T-cell (primary cell): ENCODE measurements at regions of chr13 and their contacts with region 1.

Region 1: GRCh38 chr13:75102001-75102716 is 379.8 kb downstream of the TBC1D4 start:
- DNase-seq: no peak
- ATAC-seq: no peak
- H3K4me3 ChIP-seq: no peak overlapping the region
- H3K4me3 Mint-ChIP-seq: no peak overlapping the region
- H3K27ac ChIP-seq: no peak overlapping the region
- H3K27ac Mint-ChIP-seq: no peak overlapping the region
- H3K4me1 ChIP-seq: no peaks in the 10 kb centered on the region
- H3K4me1 Mint-ChIP-seq: no peaks in the 10 kb centered on the region
- H3K27me3 ChIP-seq: no peaks in the 10 kb centered on the region
- H3K27me3 Mint-ChIP-seq: peaks cover 18 to 25% of the 10 kb centered on the region in 2 donors

Region 2: DNA sequence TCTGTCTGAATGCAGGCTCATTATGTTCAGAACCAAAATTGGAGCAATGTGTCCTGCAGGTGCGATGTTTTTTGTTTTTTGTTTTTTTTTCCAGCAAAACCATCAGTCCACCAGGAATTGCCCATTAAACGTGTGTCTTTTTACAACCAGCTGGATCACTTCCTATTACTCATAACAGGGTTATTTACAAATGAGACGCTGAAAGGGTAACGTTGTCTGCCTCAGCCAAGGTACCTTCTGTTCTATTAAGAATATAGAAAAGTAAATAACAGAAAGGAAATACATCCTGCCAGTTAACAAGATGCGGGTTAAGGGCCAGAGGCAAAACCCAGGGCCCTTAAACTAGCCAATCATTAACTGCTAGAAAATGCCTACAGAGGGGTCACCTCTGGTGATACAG is 210.5 kb before region 1 on chr13:
- CTCF ChIA-PET with region 1: no interaction called
- POLR2A ChIA-PET with region 1: no interaction called
- DNase-seq: no peak
- ATAC-seq: no peak
- H3K4me3 ChIP-seq: no peak overlapping the region
- H3K4me3 Mint-ChIP-seq: no peak overlapping the region
- H3K27ac ChIP-seq: no peak overlapping the region
- H3K27ac Mint-ChIP-seq: no peak overlapping the region
- H3K4me1 ChIP-seq: no peaks in the 10 kb centered on the region
- H3K4me1 Mint-ChIP-seq: peaks cover 0 to 4% (median 4%) of the 10 kb centered on the region in 3 donors
- H3K27me3 ChIP-seq: no peaks in the 10 kb centered on the region
- H3K27me3 Mint-ChIP-seq: peaks cover 2 to 6% of the 10 kb centered on the region in 2 donors

Region 3: GRCh38 chr13:75021151-75021550 is 81.0 kb before region 1 on chr13:
- CTCF ChIA-PET with region 1: interaction called in 1 of 2 experiments, 12 read pairs
- POLR2A ChIA-PET with region 1: no interaction called
- DNase-seq: no peak
- ATAC-seq: no peak
- H3K4me3 ChIP-seq: no peak overlapping the region
- H3K4me3 Mint-ChIP-seq: no peak overlapping the region
- H3K27ac ChIP-seq: no peak overlapping the region
- H3K27ac Mint-ChIP-seq: no peak overlapping the region
- H3K4me1 ChIP-seq: no peaks in the 10 kb centered on the region
- H3K4me1 Mint-ChIP-seq: no peaks in the 10 kb centered on the region
- H3K27me3 ChIP-seq: no peaks in the 10 kb centered on the region
- H3K27me3 Mint-ChIP-seq: peaks cover 5 to 7% of the 10 kb centered on the region in 2 donors

Region 4: DNA sequence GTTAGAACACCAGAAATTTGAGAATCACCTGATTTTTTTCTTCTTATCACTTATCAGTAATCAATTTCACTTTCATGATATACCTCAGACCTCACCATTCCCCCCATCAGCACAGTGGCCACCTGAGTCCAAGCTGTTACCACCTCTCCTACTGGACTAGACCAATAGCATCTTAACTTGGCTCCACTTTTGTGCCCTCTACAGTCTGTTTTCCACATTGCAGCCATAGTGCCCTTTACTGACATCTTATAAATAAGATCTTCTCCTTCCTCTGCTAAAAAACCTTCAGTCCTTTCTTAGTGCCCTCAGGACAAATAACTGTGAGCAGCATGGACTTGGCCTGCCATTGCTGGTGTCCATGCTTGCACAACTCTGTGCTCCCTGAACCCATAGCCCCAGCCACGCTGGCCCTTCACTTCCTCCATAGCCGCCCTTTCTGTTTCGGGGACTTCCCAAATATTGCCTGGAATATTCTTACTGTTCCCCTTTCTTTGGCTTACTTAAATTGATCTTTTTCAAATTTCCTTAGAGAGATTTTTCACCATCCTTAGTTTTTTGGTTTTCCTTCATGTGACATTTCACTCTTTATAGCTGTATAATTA is 914.7 kb after region 1 on chr13:
- CTCF ChIA-PET with region 1: no interaction called
- POLR2A ChIA-PET with region 1: no interaction called
- DNase-seq: peak in 4 of 35 experiments; percentile 3 to 29 (median 6)
- ATAC-seq: no peak
- H3K4me3 ChIP-seq: no peak overlapping the region
- H3K4me3 Mint-ChIP-seq: no peak overlapping the region
- H3K27ac ChIP-seq: no peak overlapping the region
- H3K27ac Mint-ChIP-seq: no peak overlapping the region
- H3K4me1 ChIP-seq: no peaks in the 10 kb centered on the region
- H3K4me1 Mint-ChIP-seq: no peaks in the 10 kb centered on the region
- H3K27me3 ChIP-seq: no peaks in the 10 kb centered on the region
- H3K27me3 Mint-ChIP-seq: no peaks in the 10 kb centered on the region